Activated T-helper 1 cell treated with anti-CD3 and anti-CD28 coated beads, Interleukin-12 subunit alpha, Interleukin-12 subunit beta, Interleukin-2, Interleukin-4 antibody, amounts not matched to agents 30 ng/mL and 10 ng/mL and 1 ng/mL, durations not matched to agents 14 hours and 24 hours and 36 hours (primary cell): ENCODE measurements at regions of chr17 and their contacts with region 1.

Region 1: GRCh38 chr17:79796763-79797491 is at the start of gene CBX8:
- DNase-seq: peak; percentile 100
- H3K4me3 Mint-ChIP-seq: peak within 1 kb of the TSS; percentile 85
- H3K27ac Mint-ChIP-seq: peak within 1 kb of the TSS; percentile 77
- H3K4me1 Mint-ChIP-seq: peaks cover 23% of the 10 kb centered on the region
- H3K27me3 Mint-ChIP-seq: peaks cover 42% of the 10 kb centered on the region
- total RNA-seq, gene CBX8: 6.2 and 6.6 TPM in 2 replicates

Region 2: GRCh38 chr17:79618383-79619067 is 178.4 kb before region 1 on chr17:
- intact Hi-C with region 1: no loop called
- DNase-seq: no peak
- H3K4me3 Mint-ChIP-seq: no peak overlapping the region
- H3K27ac Mint-ChIP-seq: no peak overlapping the region
- H3K4me1 Mint-ChIP-seq: no peaks in the 10 kb centered on the region
- H3K27me3 Mint-ChIP-seq: peaks cover 4% of the 10 kb centered on the region

Region 3: GRCh38 chr17:79747508-79748295 is 49.2 kb before region 1 on chr17:
- intact Hi-C with region 1: loop called (anchors 1 kb)
- DNase-seq: no peak
- H3K4me3 Mint-ChIP-seq: no peak overlapping the region
- H3K27ac Mint-ChIP-seq: peak overlapping the region; percentile 52
- H3K4me1 Mint-ChIP-seq: peaks cover 11% of the 10 kb centered on the region
- H3K27me3 Mint-ChIP-seq: peaks cover 41% of the 10 kb centered on the region

Region 4: DNA sequence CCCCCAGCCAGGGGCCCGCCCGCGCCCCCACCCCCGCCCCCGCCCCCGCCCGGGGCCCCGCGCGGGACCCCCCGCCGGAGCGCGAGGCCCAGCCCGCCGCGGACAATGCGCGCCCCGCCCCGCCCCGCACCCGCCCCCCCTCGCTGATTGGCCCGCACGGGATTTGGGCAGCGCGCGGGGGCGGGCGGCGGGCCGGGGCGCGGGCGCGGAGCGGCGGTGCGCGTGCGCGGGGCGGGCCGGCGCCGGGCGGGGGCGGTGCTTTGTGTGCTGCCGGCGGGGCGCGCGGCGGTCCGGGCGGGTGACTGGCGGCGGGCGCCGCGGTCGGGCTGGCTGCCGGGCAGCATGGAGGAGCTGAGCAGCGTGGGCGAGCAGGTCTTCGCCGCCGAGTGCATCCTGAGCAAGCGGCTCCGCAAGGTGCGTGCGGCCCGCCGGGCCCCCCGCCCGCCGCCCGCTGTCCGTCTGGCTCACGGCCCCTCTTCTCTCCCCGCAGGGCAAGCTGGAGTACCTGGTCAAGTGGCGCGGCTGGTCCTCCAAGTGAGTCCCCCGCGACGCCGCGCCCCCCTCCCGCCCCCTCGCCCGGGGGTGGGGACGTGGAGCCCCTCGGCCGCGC is 18.9 kb before region 1 on chr17 and contains the start of gene CBX2:
- intact Hi-C with region 1: loop called (anchors 2 kb)
- DNase-seq: peak; percentile 78
- H3K4me3 Mint-ChIP-seq: peak within 1 kb of the TSS; percentile 84
- H3K27ac Mint-ChIP-seq: peak within 1 kb of the TSS; percentile 87
- H3K4me1 Mint-ChIP-seq: peaks cover 12% of the 10 kb centered on the region
- H3K27me3 Mint-ChIP-seq: peaks cover 59% of the 10 kb centered on the region
- total RNA-seq, gene CBX2: 4.7 and 5.1 TPM in 2 replicates

Region 5: GRCh38 chr17:79810130-79811010 is 13.4 kb after region 1 on chr17:
- intact Hi-C with region 1: loop called (anchors 1 kb)
- DNase-seq: peak; percentile 79
- H3K4me3 Mint-ChIP-seq: peak overlapping the region; percentile 2
- H3K27ac Mint-ChIP-seq: peak overlapping the region; percentile 48
- H3K4me1 Mint-ChIP-seq: peaks cover 38% of the 10 kb centered on the region
- H3K27me3 Mint-ChIP-seq: peaks cover 64% of the 10 kb centered on the region